BJ (cell line): ENCODE measurements at regions of chr2 and their contacts with region 1.

Region 1: GRCh38 chr2:41782306-41783158 is 265.3 kb upstream of the PKDCC start:
- DNase-seq: no peak
- H3K4me3 ChIP-seq: no peak overlapping the region
- H3K27me3 ChIP-seq: no peaks in the 10 kb centered on the region
- CTCF ChIP-seq: peak; percentile 80

Region 2: GRCh38 chr2:40886660-40887059 is 895.9 kb before region 1 on chr2:
- CTCF ChIA-PET with region 1: no interaction called
- POLR2A ChIA-PET with region 1: interaction called, 12 read pairs
- DNase-seq: no peak
- H3K4me3 ChIP-seq: no peak overlapping the region
- H3K27me3 ChIP-seq: no peaks in the 10 kb centered on the region
- CTCF ChIP-seq: no peak

Region 3: DNA sequence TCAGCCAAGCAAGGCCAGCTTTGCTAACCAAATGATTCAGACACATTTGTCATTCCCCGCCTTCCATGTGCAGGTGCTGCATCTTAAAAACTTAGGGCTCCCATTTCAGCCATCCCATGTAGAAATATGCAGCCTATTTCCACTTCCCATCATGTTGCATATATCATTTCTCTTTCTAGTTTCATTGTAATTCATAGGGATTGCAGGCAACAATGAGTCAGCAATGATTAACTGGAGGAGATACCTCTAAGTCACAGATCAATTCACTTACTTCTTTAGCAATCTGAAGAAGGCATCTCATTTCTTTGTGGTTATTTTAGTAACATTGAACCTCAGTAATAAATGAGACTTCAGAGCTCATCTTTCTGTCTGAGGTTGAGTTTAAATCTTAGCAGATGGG is 10.8 kb before region 1 on chr2:
- CTCF ChIA-PET with region 1: no interaction called
- POLR2A ChIA-PET with region 1: no interaction called
- DNase-seq: no peak
- H3K4me3 ChIP-seq: no peak overlapping the region
- H3K27me3 ChIP-seq: no peaks in the 10 kb centered on the region
- CTCF ChIP-seq: no peak